ENCODE measurements at regions of chr2 and their contacts with region 1.

Region 1: DNA sequence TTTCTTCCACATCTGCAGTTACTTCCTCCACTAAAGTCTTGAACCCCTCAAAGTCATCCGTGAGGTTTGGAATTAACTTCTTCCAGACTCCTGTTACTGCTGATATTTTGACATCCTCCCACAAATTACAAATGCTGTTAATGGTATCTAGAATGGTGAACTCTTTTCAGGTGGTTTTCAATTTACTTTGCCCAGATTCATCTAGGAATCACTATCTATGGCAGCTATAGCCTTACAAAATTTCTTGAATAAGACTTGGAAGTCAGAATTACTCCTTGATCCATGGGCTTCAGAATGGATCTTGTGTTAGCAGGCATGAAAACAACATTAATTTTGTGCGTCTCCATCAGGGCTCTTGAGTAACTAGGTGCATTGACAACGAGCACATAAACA is 19.9 kb downstream of the EPAS1 start:
- DNase-seq: no peak
- H3K4me3 ChIP-seq: no peak overlapping the region
- H3K27me3 ChIP-seq: no peaks in the 10 kb centered on the region
- CTCF ChIP-seq: no peak

Region 2: DNA sequence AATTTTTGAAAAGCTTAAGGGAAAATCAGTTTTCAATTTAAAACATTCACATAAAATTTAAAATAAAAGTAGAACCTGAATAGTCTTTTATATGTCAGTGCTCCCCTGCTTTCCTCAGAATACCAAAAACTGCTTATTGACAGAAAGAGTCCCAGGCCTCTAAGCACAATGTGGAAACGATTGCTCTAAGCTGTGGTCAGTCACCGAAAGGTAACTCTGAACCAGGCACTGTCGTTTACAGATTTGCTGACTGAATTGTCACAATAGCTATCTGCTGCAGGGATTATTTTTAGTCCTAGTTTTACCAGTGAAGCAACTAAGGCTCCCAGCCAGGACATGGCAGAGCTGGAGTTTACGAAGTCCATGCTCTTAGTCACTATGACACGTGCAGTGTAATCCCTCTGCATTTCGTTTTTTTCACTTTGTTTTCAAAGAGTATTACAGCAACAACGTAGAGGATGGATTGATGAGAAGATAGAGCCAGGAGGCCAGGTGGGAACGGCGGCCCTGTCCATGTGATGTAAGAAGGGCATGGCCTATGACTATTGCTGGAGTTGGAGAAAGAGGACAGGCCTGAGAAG is 134.1 kb after region 1 on chr2:
- CTCF ChIA-PET with region 1: no interaction called
- POLR2A ChIA-PET with region 1: interaction called, 16 read pairs
- DNase-seq: no peak
- H3K4me3 ChIP-seq: no peak overlapping the region
- H3K27me3 ChIP-seq: peaks cover 2% of the 10 kb centered on the region; the same call in 1 of the 2 replicates
- CTCF ChIP-seq: no peak